HEK293 (cell line): ENCODE measurements at regions of chr1 and their contacts with region 1.

Region 1: DNA sequence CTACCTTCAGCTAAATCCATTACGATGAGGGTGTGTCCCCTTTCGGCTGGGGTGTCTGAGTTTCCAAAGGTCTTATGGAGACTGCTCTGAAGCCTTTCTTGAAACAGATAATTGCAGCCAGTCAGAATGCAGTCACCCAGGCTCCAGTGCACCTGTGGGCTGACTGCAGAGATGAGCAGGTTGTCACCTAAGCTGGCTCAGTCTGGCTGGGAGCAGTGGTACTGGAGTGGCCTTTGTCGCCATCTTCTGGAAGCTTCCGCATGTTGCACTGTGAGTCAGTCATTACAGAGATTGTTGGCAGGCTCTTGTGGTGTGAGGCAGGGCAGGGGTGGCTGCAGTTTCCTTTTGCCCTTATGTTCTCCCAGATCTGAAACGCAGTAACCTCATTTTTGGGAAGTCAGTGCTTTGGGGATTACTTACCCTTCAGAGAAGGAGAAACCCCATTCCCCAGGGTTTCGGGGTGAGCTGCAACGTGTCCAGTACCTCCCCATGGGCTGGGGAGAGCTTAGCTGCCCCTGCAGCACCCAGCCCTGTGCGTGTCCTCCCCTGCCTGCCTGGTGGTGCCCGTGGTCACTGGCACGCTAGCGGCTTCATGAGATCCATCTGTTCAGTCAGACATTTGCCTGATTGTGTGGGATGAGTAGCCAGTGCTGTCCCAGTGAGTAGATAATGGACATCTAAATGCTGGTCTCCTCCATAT is 48.0 kb downstream of the SMYD2 start:
- H3K4me3 ChIP-seq: no peak overlapping the region
- H3K27ac ChIP-seq: no peak overlapping the region
- H3K4me1 ChIP-seq: no peaks in the 10 kb centered on the region
- CTCF ChIP-seq: peak; percentile 90

Region 2: GRCh38 chr1:214101246-214101645 is 227.7 kb before region 1 on chr1:
- CTCF ChIA-PET with region 1: no interaction called
- POLR2A ChIA-PET with region 1: no interaction called
- H3K4me3 ChIP-seq: no peak overlapping the region
- H3K27ac ChIP-seq: no peak overlapping the region
- H3K4me1 ChIP-seq: no peaks in the 10 kb centered on the region
- CTCF ChIP-seq: no peak

Region 3: GRCh38 chr1:214213136-214213535 is 115.8 kb before region 1 on chr1:
- CTCF ChIA-PET with region 1: interaction called, 186 read pairs
- POLR2A ChIA-PET with region 1: interaction called, 3 read pairs
- H3K4me3 ChIP-seq: no peak overlapping the region
- H3K27ac ChIP-seq: no peak overlapping the region
- H3K4me1 ChIP-seq: no peaks in the 10 kb centered on the region
- CTCF ChIP-seq: no peak

Region 4: DNA sequence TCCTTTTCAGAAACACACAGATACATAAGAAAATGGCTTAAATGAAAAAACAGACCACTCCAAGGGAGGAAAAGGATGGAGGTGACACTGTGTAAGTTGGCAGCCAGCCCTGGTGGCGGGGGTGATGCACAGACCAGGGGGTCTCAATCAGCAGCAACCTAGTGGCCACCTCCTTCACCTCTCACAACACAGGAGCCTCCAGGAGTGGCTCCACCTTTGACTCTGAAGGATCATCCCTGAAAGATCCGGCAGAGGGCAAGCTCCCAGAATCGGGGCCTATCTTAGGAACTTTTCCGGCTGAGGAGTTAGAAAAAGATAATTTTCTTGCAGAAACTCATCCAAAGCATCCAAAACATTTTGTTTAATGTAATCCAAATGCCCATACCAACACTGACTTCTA is 99.2 kb before region 1 on chr1:
- CTCF ChIA-PET with region 1: interaction called, 25 read pairs
- POLR2A ChIA-PET with region 1: no interaction called
- H3K4me3 ChIP-seq: no peak overlapping the region
- H3K27ac ChIP-seq: no peak overlapping the region
- H3K4me1 ChIP-seq: no peaks in the 10 kb centered on the region
- CTCF ChIP-seq: no peak

Region 5: GRCh38 chr1:214277704-214278635 is 51.0 kb before region 1 on chr1:
- CTCF ChIA-PET with region 1: interaction called, 10 read pairs
- POLR2A ChIA-PET with region 1: no interaction called
- H3K4me3 ChIP-seq: no peak overlapping the region
- H3K27ac ChIP-seq: no peak overlapping the region
- H3K4me1 ChIP-seq: peaks cover 8% of the 10 kb centered on the region
- CTCF ChIP-seq: no peak

Region 6: GRCh38 chr1:214344897-214345296 is 16.0 kb after region 1 on chr1:
- CTCF ChIA-PET with region 1: interaction called, 25 read pairs
- POLR2A ChIA-PET with region 1: interaction called, 3 read pairs
- H3K4me3 ChIP-seq: no peak overlapping the region
- H3K27ac ChIP-seq: no peak overlapping the region
- H3K4me1 ChIP-seq: no peaks in the 10 kb centered on the region
- CTCF ChIP-seq: no peak

Region 7: DNA sequence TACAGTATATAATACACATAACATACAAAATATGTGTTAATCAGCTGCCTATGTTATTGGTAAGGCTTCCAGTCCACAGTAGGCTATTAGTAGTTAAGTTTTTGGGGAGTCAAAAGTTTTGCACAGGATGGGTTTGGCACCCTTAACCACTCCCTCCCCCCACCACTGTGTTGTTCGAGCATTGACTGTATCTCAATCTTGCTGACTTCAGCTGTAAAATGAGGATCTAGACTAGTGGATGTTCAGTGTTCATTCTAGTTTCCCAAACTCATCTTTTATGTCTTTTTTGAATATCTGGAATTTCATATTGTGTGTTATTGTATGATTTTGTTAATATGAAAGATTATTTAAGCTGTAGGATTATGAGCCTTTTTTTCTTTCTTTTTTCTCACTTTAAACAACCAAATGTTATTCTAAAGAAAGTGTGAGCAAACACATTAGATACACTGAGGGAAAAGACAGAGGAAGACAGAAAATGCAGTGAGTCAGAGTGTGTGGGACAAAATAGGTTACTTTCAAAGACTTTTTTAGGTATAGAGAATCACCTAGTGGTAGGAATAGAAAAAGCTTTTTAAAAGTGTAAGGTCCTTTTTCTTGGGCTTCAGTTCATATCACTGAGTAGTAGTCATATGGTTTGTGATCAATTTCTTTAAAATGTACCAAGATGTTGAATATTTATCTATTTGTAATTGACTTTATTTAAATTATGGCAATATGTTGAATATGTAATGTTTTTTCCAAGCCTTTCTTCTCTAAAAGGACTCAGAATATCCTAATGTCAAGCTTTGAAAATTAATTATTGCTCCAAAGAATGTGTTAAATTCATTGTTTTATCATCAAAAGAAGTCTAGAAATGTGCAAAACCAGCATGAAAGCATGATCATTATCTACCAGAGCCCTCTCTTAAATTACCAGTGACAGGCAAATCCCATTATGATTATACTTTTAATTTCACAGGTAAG is 256.2 kb after region 1 on chr1:
- CTCF ChIA-PET with region 1: interaction called, 404 read pairs
- POLR2A ChIA-PET with region 1: no interaction called
- H3K4me3 ChIP-seq: no peak overlapping the region
- H3K27ac ChIP-seq: no peak overlapping the region
- H3K4me1 ChIP-seq: no peaks in the 10 kb centered on the region
- CTCF ChIP-seq: peak; percentile 56; the same call in 1 of the 2 replicates